Adrenal gland (tissue), 19 donors: ENCODE measurements at regions of chr12 and their contacts with region 1.

Region 1: GRCh38 chr12:131621701-131622421 is 89.0 kb upstream of the SFSWAP start:
- DNase-seq: no peak
- H3K4me3 ChIP-seq: no peak overlapping the region
- H3K27ac ChIP-seq: no peak overlapping the region
- H3K4me1 ChIP-seq: no peaks in the 10 kb centered on the region
- H3K27me3 ChIP-seq: no peaks in the 10 kb centered on the region
- CTCF ChIP-seq: no peak
- POLR2A ChIP-seq: no peak

Region 2: GRCh38 chr12:131345521-131346436 is 276.1 kb before region 1 on chr12:
- intact Hi-C with region 1: loop called in 1 of 2 experiments (anchors 5 kb)
- DNase-seq: no peak
- H3K4me3 ChIP-seq: no peak overlapping the region
- H3K27ac ChIP-seq: no peak overlapping the region
- H3K4me1 ChIP-seq: peaks cover 0 to 3% of the 10 kb centered on the region in 2 donors
- H3K27me3 ChIP-seq: no peaks in the 10 kb centered on the region
- CTCF ChIP-seq: no peak
- POLR2A ChIP-seq: no peak

Region 3: DNA sequence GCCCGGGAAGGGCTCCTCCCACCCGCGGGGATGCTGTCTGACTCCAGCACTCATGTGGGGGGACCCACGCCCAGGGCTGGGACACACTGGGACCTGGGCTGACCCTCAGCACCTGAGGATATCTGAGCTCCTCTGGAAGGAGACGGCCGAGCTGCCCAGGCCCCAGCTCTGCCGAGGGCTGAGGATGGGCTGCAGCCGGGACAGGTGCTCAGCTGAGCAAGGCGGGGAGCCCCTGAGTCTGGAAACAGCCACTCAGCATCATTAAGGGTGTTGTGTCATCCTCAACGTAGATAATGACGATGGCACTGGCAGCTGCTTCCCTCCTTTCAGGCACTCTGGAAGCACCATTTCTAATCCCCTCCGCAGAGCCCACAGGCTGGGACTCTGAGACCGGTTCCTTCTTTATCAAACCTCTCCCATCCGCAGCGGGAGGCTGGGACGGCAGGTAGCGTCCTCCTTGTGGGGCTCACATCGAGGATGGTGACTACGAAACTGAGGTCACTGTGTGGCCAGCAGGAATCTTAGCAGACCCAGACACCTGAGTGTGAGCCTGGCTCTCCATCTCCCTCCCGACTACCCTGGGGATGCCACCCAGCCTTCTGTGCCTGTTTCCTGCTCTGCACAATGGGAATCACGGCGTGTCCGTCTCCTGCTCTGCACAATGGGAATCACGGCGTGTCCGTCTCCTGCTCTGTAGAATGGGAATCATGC is 62.3 kb after region 1 on chr12:
- intact Hi-C with region 1: no loop called
- DNase-seq: peak in 1 of 7 donors; percentile 30
- H3K4me3 ChIP-seq: no peak overlapping the region
- H3K27ac ChIP-seq: no peak overlapping the region
- H3K4me1 ChIP-seq: no peaks in the 10 kb centered on the region
- H3K27me3 ChIP-seq: no peaks in the 10 kb centered on the region
- CTCF ChIP-seq: no peak
- POLR2A ChIP-seq: no peak